ENCODE measurements at regions of chr10 and their contacts with region 1.

Region 1: GRCh38 chr10:13769955-13770354 is 183.2 kb downstream of the PRPF18 start:
- DNase-seq: no peak
- ATAC-seq: no peak
- H3K4me3 ChIP-seq: no peak overlapping the region
- H3K27ac ChIP-seq: no peak overlapping the region
- H3K4me1 ChIP-seq: no peaks in the 10 kb centered on the region
- H3K27me3 ChIP-seq: peaks cover 27 to 57% of the 10 kb centered on the region in 2 experiments
- CTCF ChIP-seq: no peak
- EP300 ChIP-seq: no peak
- POLR2A ChIP-seq: no peak
- RAD21 ChIP-seq: no peak

Region 2: DNA sequence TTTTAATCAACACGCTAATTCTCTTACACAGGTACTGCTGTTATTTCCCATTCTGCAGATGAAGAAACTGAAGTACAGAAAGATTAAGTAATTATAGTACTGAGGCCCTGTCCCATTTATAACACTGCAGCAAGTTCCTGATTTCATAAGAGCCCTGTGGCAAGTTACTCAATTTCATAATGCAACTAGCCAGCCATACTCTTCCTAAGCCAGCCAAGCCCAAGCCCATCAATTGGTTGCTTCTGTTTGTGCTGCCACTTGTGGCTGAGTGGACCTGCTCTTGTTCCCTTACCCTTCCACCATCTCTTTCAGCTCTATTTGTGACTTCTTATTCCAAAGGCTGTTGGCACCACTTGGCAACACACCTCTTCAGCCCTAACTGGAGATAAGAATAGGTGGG is 202.9 kb before region 1 on chr10:
- CTCF ChIA-PET with region 1: no interaction called
- POLR2A ChIA-PET with region 1: no interaction called
- in situ Hi-C with region 1: no loop called
- intact Hi-C with region 1: no loop called
- DNase-seq: no peak
- ATAC-seq: no peak
- H3K4me3 ChIP-seq: no peak overlapping the region
- H3K27ac ChIP-seq: no peak overlapping the region
- H3K4me1 ChIP-seq: no peaks in the 10 kb centered on the region
- H3K27me3 ChIP-seq: no peaks in the 10 kb centered on the region; a peak in 3 of 5 replicates
- CTCF ChIP-seq: no peak
- EP300 ChIP-seq: no peak
- POLR2A ChIP-seq: no peak
- RAD21 ChIP-seq: no peak

Region 3: GRCh38 chr10:13649844-13650521 is 120.0 kb before region 1 on chr10:
- CTCF ChIA-PET with region 1: no interaction called
- POLR2A ChIA-PET with region 1: no interaction called
- in situ Hi-C with region 1: loop called (anchors 5 kb)
- intact Hi-C with region 1: no loop called
- DNase-seq: no peak
- ATAC-seq: peak; percentile 33; the same call in 1 of the 3 replicates
- H3K4me3 ChIP-seq: no peak overlapping the region
- H3K27ac ChIP-seq: no peak overlapping the region
- H3K4me1 ChIP-seq: no peaks in the 10 kb centered on the region
- H3K27me3 ChIP-seq: no peaks in the 10 kb centered on the region
- CTCF ChIP-seq: no peak
- EP300 ChIP-seq: no peak
- POLR2A ChIP-seq: 0 out of 2 replicates have a peak, but pooled peaks have one; percentile 22
- RAD21 ChIP-seq: no peak

Region 4: DNA sequence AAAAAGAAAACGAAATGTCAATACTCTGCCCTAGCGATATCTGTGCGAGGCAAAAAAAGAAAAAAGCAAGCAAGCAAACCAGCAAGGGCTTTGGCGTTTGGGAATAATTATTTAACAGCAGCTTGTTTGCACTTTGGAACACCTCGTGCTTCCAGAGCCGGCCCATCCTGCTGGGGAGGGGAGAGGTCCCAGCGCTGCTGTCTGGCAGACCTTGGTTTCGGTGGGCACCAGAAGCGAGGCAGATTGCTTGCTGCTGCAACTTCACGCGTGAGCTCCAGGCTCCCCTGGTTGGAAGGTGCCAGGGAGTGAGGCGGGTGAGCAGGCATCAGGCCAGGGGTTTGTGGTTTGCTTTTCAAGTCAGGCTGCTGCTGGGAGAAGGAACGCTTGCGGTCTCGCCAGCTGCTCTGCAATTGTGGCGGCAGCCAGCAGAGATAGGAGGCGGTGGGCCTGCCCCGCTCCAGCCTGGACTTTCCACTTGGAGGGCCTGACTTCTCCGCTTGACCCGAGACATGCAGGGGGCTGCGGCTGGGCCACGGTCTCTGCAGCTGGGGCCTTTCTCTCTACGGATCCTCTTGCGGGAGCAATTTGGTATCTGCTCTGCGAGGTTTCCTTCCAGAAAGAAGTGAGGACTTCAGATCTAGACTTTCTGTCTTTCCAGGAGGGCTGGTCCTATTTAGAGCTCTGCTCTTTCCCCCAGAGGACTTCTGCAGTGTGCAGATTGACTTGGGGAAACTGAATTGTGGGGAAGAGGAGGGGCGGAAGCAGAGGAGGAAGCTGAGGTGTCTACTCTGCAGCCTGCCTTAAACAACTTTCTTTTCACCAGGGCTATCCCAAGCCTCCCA is 51.8 kb before region 1 on chr10:
- CTCF ChIA-PET with region 1: no interaction called
- POLR2A ChIA-PET with region 1: no interaction called
- in situ Hi-C with region 1: no loop called
- intact Hi-C with region 1: no loop called
- DNase-seq: no peak
- ATAC-seq: peak; percentile 75
- H3K4me3 ChIP-seq: no peak overlapping the region
- H3K27ac ChIP-seq: no peak overlapping the region
- H3K4me1 ChIP-seq: peaks cover under 1 to 9% of the 10 kb centered on the region in 2 experiments; a peak in 3 of 5 replicates
- H3K27me3 ChIP-seq: peaks cover 17 to 31% of the 10 kb centered on the region in 2 experiments
- CTCF ChIP-seq: no peak
- EP300 ChIP-seq: no peak
- POLR2A ChIP-seq: no peak
- RAD21 ChIP-seq: no peak

Region 5: GRCh38 chr10:13743963-13744362 is 26.0 kb before region 1 on chr10:
- CTCF ChIA-PET with region 1: no interaction called
- POLR2A ChIA-PET with region 1: no interaction called
- in situ Hi-C with region 1: no loop called
- intact Hi-C with region 1: no loop called
- DNase-seq: no peak
- ATAC-seq: no peak
- H3K4me3 ChIP-seq: no peak overlapping the region
- H3K27ac ChIP-seq: no peak overlapping the region
- H3K4me1 ChIP-seq: no peaks in the 10 kb centered on the region
- H3K27me3 ChIP-seq: peaks cover 50 to 72% of the 10 kb centered on the region in 2 experiments
- CTCF ChIP-seq: no peak
- EP300 ChIP-seq: no peak
- POLR2A ChIP-seq: no peak
- RAD21 ChIP-seq: no peak